Ascending aorta (tissue), 2 donors: ENCODE measurements at regions of chr4 and their contacts with region 1.

Region 1: DNA sequence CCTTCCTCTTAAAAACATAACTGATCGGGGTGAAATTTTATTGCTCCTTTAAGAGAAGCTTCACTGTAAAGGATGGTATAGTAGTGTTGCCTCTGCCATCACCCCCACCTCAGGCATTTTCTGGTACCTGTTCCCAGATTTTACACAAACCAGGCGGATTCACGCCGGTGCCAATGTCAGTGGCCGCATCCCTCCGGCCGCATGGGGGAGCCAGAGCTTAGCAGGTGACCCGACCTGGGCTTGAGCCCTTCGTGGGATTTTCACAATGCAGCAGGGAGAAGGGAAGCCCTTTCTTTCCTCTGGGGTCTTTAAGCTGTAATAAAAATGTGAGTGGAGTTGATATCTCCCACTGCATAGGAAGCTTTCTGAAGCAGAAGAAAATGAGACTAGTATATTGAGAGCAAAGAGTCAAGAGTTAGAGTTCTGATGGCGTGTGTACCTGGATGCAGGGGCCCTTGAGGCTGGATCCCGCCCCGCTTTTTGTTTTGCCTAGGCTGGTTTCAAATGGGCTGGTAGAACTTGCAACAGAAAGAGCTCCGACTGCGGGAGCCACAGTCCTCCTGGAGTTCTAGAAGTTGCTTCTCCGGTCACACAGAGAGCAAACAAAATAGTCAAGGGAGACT is 59.4 kb downstream of the POLR2B start:
- DNase-seq: peak in 1 of 2 donors; percentile 86
- H3K4me3 ChIP-seq: no peak overlapping the region
- H3K27ac ChIP-seq: peak overlapping the region; percentile 65 to 85
- H3K4me1 ChIP-seq: peaks cover 0 to 47% of the 10 kb centered on the region in 2 donors
- H3K27me3 ChIP-seq: no peaks in the 10 kb centered on the region
- CTCF ChIP-seq: peak; percentile 68 to 89 (median 83)

Region 2: DNA sequence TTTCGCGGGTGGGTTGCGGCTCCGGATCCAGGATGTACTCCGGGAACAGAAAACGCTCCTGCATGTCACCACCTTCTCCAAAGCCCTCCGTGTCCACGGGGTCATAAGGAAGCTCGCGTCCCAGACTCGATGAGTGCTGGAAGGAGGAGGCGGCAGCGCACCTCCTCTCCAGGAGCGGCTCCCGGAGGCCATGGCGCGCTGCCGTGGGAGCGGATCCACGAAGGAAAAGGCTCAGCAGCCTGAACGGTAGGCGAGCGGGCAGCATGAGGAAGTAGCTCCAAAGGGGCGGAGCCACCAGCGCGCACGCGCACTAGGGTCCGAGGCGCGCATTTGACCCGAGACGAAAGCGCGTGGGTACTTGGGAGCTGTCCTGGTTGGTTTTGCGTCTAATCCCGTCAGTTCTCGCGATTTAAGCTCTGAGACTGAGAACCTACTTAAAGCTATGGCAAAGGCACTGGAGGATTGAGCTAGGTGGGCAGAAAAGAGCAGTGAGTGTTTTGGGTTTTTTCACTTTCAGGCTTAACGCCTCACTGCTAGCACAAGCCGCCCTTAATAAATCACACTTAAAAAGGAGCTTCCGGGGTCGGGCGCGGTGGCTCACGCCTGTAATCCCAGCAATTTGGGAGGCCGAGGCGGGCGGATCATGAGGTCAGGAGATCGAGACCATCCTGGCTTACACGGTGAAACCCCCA is 60.6 kb before region 1 on chr4 and contains the start of gene NOA1:
- intact Hi-C with region 1: loop called (anchors 5 kb)
- DNase-seq: peak; percentile 98 to 100
- H3K4me3 ChIP-seq: peak within 1 kb of the TSS; percentile 84 to 91
- H3K27ac ChIP-seq: peak within 1 kb of the TSS; percentile 90 to 94
- H3K4me1 ChIP-seq: peaks cover 5 to 19% of the 10 kb centered on the region in 2 donors
- H3K27me3 ChIP-seq: no peaks in the 10 kb centered on the region
- CTCF ChIP-seq: no peak
- total RNA-seq, gene NOA1: 36.6 TPM

Region 3: GRCh38 chr4:57020467-57021101 is 17.5 kb before region 1 on chr4:
- intact Hi-C with region 1: no loop called
- DNase-seq: no peak
- H3K4me3 ChIP-seq: no peak overlapping the region
- H3K27ac ChIP-seq: peak overlapping the region in 1 of 2 donors; percentile 5
- H3K4me1 ChIP-seq: no peaks in the 10 kb centered on the region
- H3K27me3 ChIP-seq: no peaks in the 10 kb centered on the region
- CTCF ChIP-seq: no peak

Region 4: DNA sequence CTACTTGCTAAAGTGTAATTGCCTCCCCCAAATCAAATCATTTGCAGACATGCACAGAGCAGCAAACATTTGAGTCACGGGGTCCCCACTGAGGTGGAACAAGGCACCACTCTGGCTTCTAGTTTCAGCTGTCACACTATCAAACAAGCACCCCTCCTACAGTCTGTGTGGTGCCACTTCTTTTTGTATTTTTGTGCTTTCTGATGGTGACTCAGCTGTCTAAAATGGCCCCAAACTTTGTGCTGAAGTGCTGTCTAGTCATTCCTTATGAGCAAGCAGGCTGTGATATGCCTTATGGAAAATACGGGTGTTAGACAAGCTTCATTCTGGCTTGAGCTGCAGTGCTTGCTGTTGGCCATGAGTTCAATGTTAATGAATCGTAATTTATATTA is 56.7 kb after region 1 on chr4:
- intact Hi-C with region 1: loop called (anchors 1 kb)
- DNase-seq: no peak
- H3K4me3 ChIP-seq: peak overlapping the region in 1 of 2 donors; percentile 0
- H3K27ac ChIP-seq: peak overlapping the region; percentile 75 to 95
- H3K4me1 ChIP-seq: peaks cover 20 to 81% of the 10 kb centered on the region in 2 donors
- H3K27me3 ChIP-seq: no peaks in the 10 kb centered on the region
- CTCF ChIP-seq: peak; percentile 24 to 37 (median 37)

Region 5: DNA sequence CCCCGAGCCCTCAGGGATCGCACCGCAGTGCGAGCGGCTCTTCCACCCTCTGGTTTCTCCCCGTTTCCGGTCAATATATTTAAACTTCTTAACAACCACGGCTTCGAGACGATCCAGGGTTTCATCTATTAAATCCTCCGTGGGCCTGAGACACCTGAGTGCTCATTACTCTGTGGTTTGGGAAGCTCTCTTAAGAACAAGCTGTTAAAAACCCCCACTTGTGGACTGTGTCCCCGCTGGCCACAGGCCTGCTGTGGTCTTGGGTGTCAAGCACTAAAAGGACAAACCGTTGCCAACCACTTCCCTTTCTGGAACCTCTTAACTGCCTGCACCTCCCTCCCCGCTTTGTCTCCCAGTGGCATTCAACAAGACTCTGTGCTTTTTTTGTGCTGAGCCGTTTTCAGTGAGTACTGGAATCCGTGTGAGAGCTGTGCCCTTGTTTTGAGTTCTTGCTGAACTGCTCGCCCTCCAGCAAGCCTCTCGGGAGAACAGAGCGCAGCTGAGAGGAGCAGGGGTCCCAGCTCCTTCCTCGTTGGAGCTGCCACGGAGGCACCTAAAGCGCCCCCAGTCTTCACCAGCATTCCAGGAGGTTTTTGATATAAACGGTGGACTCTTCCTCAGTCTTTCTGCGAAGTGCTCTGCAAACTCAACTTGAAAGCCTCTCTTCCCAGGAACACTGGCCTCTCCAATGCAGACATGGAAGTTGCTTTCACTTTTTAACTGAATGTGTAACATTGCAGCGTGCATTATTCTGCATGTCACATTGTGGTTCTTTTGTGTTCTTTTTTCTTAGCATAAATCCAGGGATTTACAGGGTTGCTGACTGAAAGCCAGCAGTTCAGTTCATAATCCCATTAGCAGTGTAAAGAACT is 72.8 kb after region 1 on chr4:
- intact Hi-C with region 1: loop called (anchors 2 kb)
- DNase-seq: peak in 1 of 2 donors; percentile 82
- H3K4me3 ChIP-seq: peak overlapping the region; percentile 80 to 89
- H3K27ac ChIP-seq: peak overlapping the region; percentile 95 to 98
- H3K4me1 ChIP-seq: peaks cover 0 to 14% of the 10 kb centered on the region in 2 donors
- H3K27me3 ChIP-seq: no peaks in the 10 kb centered on the region
- CTCF ChIP-seq: no peak

Region 6: DNA sequence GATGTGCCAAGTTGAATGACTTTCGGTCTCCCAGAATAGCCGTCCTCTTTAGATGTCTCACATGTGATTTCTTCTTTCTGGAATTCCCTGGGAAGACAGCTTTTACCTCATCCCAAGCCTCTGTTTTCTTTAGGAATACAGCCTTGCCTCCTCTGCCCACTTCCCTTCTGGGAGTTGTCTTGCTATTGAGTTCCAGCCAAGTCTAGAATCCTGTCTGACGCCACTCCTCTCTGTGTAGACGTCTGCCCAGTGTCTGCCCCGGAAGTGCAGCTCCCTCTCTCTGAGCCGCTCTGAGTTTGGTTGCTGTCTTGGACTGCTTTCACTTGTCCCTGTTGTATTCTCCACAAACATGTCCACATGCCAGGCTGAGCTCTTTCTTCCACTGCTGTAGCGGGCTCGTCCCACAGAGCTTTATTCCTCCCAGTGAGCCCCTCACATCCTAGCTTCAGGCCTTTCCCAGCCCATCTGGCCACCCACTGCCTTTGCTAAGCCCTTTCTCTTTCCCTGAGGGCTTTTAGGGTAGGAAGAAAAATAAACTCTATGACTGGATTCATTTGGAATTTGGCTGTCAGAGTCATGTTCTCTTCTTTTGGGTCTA is 81.1 kb after region 1 on chr4:
- intact Hi-C with region 1: loop called (anchors 1 kb)
- DNase-seq: peak in 1 of 2 donors; percentile 89
- H3K4me3 ChIP-seq: peak overlapping the region; percentile 36 to 59
- H3K27ac ChIP-seq: peak overlapping the region; percentile 89 to 96
- H3K4me1 ChIP-seq: peaks cover 14 to 37% of the 10 kb centered on the region in 2 donors
- H3K27me3 ChIP-seq: no peaks in the 10 kb centered on the region
- CTCF ChIP-seq: no peak

Region 7: DNA sequence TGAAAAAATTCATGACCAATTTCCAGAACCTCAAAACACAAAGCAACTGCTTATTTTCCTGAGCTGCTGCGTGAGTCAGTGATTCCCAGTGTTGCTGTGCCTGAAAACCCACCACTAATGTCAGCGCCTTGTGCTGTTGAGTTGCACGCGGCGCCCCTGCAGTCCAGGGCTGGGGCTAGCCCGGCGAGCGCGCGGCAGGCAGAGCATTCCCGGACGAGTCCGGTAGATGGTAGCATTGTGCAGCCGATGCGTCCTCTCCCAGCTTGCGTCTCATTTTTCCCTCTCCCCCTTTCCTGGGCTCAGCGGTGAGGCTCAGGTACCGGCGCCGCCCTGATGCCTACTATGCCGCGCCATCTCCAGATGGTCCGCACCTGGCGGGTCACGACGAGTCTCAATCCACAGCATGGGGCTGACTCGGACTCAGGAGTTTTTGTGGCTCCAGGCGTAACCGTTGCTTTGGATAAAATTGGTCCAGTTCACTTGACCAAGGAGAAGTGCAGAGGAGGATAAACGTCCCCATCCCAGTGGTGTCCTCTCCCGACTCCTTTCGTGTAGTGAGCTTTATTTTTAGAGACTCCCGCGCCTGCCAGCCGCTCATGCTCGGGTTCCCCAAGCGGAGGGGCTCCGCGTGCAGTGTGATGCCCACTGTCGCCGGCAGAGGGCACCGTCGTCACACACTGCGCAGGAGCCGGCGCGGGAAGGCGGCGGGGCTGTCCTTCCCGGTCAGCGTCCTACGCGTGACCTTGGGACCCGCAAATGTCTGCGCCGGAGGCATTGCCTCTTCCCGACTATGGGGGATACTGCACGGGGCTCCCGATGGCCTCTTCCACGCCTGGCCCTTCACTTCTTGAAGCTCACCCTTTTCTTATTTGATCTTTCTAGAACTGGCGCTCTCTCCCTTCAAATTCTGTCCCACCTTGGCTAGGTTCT is 125.7 kb after region 1 on chr4:
- intact Hi-C with region 1: loop called (anchors 1 kb)
- DNase-seq: peak; percentile 26 to 89
- H3K4me3 ChIP-seq: peak overlapping the region; percentile 54 to 71
- H3K27ac ChIP-seq: peak overlapping the region; percentile 47 to 73
- H3K4me1 ChIP-seq: peaks cover 0 to 2% of the 10 kb centered on the region in 2 donors
- H3K27me3 ChIP-seq: no peaks in the 10 kb centered on the region
- CTCF ChIP-seq: peak; percentile 80 to 96 (median 84)

Region 8: DNA sequence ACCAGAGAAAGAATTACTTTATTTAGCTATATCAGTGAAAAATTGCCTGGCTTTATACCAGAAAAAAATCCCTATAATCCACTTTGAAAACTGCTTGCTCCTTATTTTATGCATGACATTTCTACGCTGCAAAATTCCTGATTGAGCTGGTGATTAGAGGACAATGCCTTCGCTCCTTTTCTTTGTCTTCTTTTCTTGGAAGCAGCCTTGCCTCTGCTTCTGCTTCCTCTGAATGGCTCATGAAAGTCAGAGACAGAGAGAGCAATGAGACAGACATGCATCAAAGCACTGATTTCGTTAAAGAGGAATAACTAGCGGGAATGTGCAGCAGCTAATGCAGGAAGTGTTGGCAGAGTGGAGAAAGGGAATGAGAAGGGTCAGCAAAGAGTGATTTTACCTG is 366.4 kb after region 1 on chr4:
- intact Hi-C with region 1: no loop called
- DNase-seq: no peak
- H3K4me3 ChIP-seq: no peak overlapping the region
- H3K27ac ChIP-seq: no peak overlapping the region
- H3K4me1 ChIP-seq: no peaks in the 10 kb centered on the region
- H3K27me3 ChIP-seq: no peaks in the 10 kb centered on the region
- CTCF ChIP-seq: no peak